ENCODE measurements at regions of chr2 and their contacts with region 1.

Region 1: GRCh38 chr2:218568190-218569037 is at the starts of genes CNOT9 and USP37:
- DNase-seq: peak; percentile 99
- H3K4me3 ChIP-seq: peak within 1 kb of the TSS; percentile 72 to 80
- H3K27ac ChIP-seq: peak within 1 kb of the TSS; percentile 92 to 93
- H3K4me1 ChIP-seq: no peaks in the 10 kb centered on the region
- H3K27me3 ChIP-seq: no peaks in the 10 kb centered on the region
- CTCF ChIP-seq: peak in 1 of 4 experiments; percentile 13
- POLR2A ChIP-seq: peak; percentile 93
- total RNA-seq, gene CNOT9: 31.7 to 77.6 TPM
- total RNA-seq, gene USP37: 12.3 to 31.9 TPM

Region 2: DNA sequence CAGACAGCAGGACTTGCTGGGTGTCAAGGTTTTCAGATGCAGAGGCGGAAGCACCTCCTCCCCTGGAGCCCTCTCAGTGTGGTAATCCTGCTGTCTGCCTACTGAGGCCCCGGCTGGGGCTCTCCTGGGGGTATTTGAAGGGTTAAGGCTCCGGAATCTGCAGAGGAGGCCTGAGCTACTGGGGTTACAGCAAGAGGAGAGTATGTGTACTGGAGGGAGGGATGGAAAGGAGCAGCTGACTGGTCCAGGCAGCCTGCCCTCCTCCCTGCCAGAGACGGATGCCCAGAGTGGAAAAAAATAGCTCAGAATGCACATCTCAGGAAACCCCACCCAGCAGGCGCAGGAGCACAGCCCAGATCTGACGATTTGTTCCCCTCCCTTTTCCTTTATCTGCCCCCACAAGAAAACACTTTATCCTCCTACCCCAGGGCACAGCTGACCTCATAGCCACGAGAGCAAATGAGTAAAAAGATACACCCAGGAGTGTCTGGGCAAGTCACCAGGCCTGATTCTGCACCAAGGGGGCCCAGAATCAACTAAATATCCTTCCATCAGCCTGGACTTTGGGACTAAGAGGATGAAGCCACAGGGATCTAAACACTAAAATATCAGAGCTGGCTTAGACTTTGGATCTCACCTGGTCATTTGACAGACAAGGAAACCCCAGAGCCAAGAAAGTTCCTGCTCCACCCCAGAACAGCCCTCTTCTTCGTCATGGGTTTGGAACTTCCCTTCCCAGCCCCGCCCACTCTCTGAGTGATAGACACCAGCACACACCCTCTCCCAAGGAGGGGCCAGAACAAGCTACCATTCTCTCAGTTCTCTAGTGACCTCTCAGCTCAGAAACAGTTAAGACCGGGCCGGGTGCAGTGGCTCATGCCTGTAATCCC is 281.6 kb before region 1 on chr2:
- intact Hi-C with region 1: loop called (anchors 10 kb)
- DNase-seq: peak; percentile 90
- H3K4me3 ChIP-seq: peak overlapping the region; percentile 13 to 20
- H3K27ac ChIP-seq: peak overlapping the region; percentile 94 to 96
- H3K4me1 ChIP-seq: peaks cover 63% of the 10 kb centered on the region
- H3K27me3 ChIP-seq: no peaks in the 10 kb centered on the region
- CTCF ChIP-seq: no peak
- POLR2A ChIP-seq: peak; percentile 73

Region 3: GRCh38 chr2:218406209-218406948 is 162.0 kb before region 1 on chr2:
- intact Hi-C with region 1: loop called (anchors 2 kb)
- DNase-seq: peak; percentile 96
- H3K4me3 ChIP-seq: peak overlapping the region; percentile 27 to 35
- H3K27ac ChIP-seq: peak overlapping the region; percentile 92 to 99
- H3K4me1 ChIP-seq: peaks cover 25% of the 10 kb centered on the region
- H3K27me3 ChIP-seq: no peaks in the 10 kb centered on the region
- CTCF ChIP-seq: peak; percentile 51 to 91 (median 83)
- POLR2A ChIP-seq: peak; percentile 11

Region 4: GRCh38 chr2:218607436-218608115 is 39.2 kb after region 1 on chr2 and contains the start of gene PLCD4:
- intact Hi-C with region 1: loop called (anchors 5 kb)
- DNase-seq: no peak
- H3K4me3 ChIP-seq: no peak within 1 kb of the TSS
- H3K27ac ChIP-seq: peak within 1 kb of the TSS in 1 of 2 donors; percentile 10
- H3K4me1 ChIP-seq: no peaks in the 10 kb centered on the region
- H3K27me3 ChIP-seq: no peaks in the 10 kb centered on the region
- CTCF ChIP-seq: peak in 1 of 4 experiments; percentile 14
- POLR2A ChIP-seq: no peak
- total RNA-seq, gene PLCD4: 1.1 to 2.7 TPM

Region 5: GRCh38 chr2:218648088-218648786 is 79.8 kb after region 1 on chr2:
- intact Hi-C with region 1: loop called (anchors 5 kb)
- DNase-seq: peak; percentile 28
- H3K4me3 ChIP-seq: no peak overlapping the region
- H3K27ac ChIP-seq: no peak overlapping the region
- H3K4me1 ChIP-seq: no peaks in the 10 kb centered on the region
- H3K27me3 ChIP-seq: no peaks in the 10 kb centered on the region
- CTCF ChIP-seq: peak; percentile 54 to 73 (median 62)
- POLR2A ChIP-seq: no peak